ENCODE measurements at regions of chr3 and their contacts with region 1.

Region 1: GRCh38 chr3:112007633-112008032 is 8.9 kb downstream of the TAGLN3 start:
- DNase-seq: peak; percentile 31
- H3K4me3 ChIP-seq: no peak overlapping the region
- H3K27me3 ChIP-seq: no peaks in the 10 kb centered on the region
- CTCF ChIP-seq: no peak

Region 2: DNA sequence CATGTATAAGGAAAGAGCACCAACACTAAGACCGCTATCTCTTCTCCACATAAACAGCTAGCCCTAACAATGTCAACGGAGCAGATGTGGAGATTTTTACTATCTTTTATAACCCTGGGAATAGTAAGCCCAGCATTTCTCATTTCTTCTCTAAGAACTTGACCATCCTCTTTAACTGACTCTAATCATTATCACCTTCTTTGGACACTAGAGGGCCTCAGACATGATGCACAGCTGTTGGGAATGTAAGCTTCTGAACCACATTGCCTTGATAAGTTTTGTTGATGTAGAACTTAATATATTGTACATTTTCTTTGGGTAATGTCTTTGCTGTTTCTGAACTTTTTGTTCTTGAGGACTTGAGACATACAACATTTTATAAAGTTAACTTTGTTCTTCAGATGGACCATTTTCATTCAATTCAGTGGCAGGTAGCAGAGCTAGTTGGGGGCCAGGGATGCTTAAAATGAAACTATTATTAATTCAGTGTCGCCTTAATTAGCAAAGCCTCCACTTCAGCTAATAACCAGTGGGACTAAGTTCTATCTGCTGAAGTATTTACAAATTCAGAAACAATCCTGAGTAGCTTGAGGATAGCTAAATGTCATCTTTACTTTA is 18.5 kb before region 1 on chr3:
- CTCF ChIA-PET with region 1: interaction called, 203 read pairs
- POLR2A ChIA-PET with region 1: no interaction called
- DNase-seq: peak; percentile 25
- H3K4me3 ChIP-seq: no peak overlapping the region
- H3K27me3 ChIP-seq: no peaks in the 10 kb centered on the region
- CTCF ChIP-seq: peak; percentile 79

Measured in BJ (cell line).